Colonic mucosa (tissue), 4 donors: ENCODE measurements at regions of chr1 and their contacts with region 1.

Region 1: GRCh38 chr1:50704126-50704525 is 255.9 kb downstream of the FAF1 start:
- DNase-seq: no peak
- H3K4me3 ChIP-seq: no peak overlapping the region
- H3K27ac ChIP-seq: no peak overlapping the region
- H3K4me1 ChIP-seq: no peaks in the 10 kb centered on the region
- H3K27me3 ChIP-seq: no peaks in the 10 kb centered on the region
- CTCF ChIP-seq: peak; percentile 67

Region 2: GRCh38 chr1:49824261-49824660 is 879.9 kb before region 1 on chr1:
- intact Hi-C with region 1: no loop called
- DNase-seq: no peak
- H3K4me3 ChIP-seq: no peak overlapping the region
- H3K27ac ChIP-seq: no peak overlapping the region
- H3K4me1 ChIP-seq: no peaks in the 10 kb centered on the region
- H3K27me3 ChIP-seq: no peaks in the 10 kb centered on the region
- CTCF ChIP-seq: no peak

Region 3: DNA sequence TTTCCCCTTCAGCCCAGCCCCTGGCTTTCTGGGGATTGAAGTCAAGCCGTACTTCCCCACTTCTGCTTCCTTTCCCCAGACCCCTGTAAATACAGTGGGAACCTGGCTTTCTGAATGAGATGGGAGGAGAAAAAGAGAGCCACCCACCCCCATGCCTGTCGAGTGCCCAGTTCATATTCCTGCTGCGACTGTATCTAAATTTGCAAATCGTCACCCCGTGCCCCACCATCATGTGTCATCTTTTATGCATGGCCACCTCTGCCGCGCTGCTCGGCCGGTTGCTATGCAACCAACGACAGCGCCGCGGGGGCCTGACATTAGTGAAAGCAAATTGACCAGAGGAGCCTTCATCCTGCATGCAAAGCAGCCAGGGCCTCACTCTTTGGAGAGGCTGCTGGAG is 452.4 kb before region 1 on chr1:
- intact Hi-C with region 1: no loop called
- DNase-seq: no peak
- H3K4me3 ChIP-seq: no peak overlapping the region
- H3K27ac ChIP-seq: no peak overlapping the region
- H3K4me1 ChIP-seq: no peaks in the 10 kb centered on the region
- H3K27me3 ChIP-seq: no peaks in the 10 kb centered on the region
- CTCF ChIP-seq: no peak

Region 4: DNA sequence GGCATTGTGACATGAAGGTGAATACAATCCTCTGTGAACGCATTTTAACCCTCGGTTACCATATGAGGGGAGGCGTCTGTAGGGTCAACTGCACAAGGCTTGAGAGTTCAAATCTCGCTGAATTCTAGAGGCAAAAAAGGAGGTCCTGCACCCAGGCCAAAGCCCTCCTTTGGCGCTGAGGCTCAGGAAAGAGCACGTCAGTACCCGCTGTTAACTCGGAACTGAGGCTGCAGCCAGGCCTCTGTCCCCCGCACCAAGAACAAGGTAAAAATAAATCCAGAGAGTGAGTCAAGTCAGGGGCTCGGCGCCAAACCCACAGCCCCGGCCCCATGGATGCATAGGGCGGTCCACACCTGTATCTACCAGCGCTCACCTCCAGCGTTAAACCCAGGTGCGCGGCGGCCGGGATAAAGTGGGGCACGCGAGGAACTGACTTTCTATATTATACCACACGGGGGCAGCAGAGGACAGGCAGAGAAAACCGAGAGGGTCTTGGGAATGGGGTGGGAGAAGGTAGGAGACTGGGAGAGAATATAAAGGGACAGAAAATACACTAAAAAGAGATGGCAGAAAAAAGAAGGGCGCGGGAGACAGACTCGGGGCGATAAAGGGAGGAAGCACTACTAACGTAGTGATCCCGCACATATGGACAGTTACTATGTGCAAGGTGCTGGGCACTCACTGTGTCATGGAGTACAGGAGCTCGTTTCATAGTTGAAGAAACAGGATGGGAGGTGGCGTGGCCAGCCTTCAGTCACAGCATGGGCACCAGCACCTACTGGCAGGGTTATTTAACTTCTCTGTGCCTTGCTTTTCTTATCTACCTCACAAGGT is 335.7 kb before region 1 on chr1:
- intact Hi-C with region 1: loop called (anchors 5 kb)
- DNase-seq: peak; percentile 48
- H3K4me3 ChIP-seq: no peak overlapping the region
- H3K27ac ChIP-seq: no peak overlapping the region
- H3K4me1 ChIP-seq: no peaks in the 10 kb centered on the region
- H3K27me3 ChIP-seq: peaks cover 7% of the 10 kb centered on the region
- CTCF ChIP-seq: peak; percentile 58

Region 5: GRCh38 chr1:50620680-50621329 is 83.3 kb before region 1 on chr1:
- intact Hi-C with region 1: loop called (anchors 5 kb)
- DNase-seq: peak; percentile 40
- H3K4me3 ChIP-seq: no peak overlapping the region
- H3K27ac ChIP-seq: peak overlapping the region; percentile 53
- H3K4me1 ChIP-seq: no peaks in the 10 kb centered on the region
- H3K27me3 ChIP-seq: no peaks in the 10 kb centered on the region
- CTCF ChIP-seq: peak; percentile 27

Region 6: GRCh38 chr1:51175278-51175677 is 471.2 kb after region 1 on chr1:
- intact Hi-C with region 1: no loop called
- DNase-seq: no peak
- H3K4me3 ChIP-seq: no peak overlapping the region
- H3K27ac ChIP-seq: no peak overlapping the region
- H3K4me1 ChIP-seq: no peaks in the 10 kb centered on the region
- H3K27me3 ChIP-seq: no peaks in the 10 kb centered on the region
- CTCF ChIP-seq: no peak